ENCODE measurements at regions of chr4 and their contacts with region 1.

Region 1: GRCh38 chr4:26076000-26076587 is 162.1 kb downstream of the SMIM20 start:
- DNase-seq: peak; percentile 63
- H3K4me3 Mint-ChIP-seq: peak overlapping the region; percentile 64
- H3K27ac Mint-ChIP-seq: peak overlapping the region; percentile 92
- H3K4me1 Mint-ChIP-seq: peaks cover 86% of the 10 kb centered on the region
- H3K27me3 Mint-ChIP-seq: no peaks in the 10 kb centered on the region

Region 2: DNA sequence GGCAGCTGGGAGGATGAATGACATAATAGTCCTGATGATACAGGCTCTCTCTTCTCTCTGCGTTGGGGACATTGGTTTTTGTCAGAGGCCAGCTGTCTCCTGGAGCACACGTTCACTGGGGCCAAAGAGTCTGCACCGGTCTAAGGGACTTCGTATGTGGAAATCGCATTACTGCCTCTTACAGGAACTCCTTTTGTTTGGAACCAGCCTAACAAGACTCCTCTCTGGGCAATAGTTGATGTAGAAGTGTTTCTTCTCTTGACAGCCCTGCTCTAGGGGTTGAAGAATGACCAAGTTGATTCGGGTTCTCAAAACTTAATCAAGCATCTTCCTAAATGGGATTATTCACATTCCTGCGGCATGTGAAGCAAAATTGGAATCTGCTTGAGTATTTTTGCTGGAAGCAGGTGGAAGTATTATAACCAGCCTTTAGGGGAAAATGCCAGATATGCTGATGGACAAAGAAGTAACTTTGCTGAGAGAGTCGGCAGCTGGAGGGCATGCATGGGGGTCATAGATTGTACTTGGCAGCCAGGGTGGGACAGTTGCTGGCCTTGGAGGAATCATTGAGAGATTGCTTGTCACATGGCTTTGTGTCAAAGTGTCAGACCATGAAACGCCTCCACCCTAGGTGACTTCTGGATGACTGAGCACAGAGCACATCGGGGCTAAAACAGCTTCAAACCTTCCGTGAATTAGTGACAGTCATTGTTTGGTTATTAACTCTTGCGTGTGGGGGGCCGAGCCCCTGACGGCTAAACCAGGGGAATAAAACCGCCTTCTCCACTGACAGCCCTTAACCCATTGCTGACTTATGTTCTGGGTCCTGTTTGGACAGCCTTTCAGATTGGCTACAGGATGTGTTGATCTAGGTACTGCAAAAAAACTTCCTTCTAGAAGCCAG is 454.8 kb before region 1 on chr4:
- intact Hi-C with region 1: no loop called
- DNase-seq: no peak
- H3K4me3 Mint-ChIP-seq: no peak overlapping the region
- H3K27ac Mint-ChIP-seq: no peak overlapping the region
- H3K4me1 Mint-ChIP-seq: no peaks in the 10 kb centered on the region
- H3K27me3 Mint-ChIP-seq: peaks cover 4% of the 10 kb centered on the region

Region 3: DNA sequence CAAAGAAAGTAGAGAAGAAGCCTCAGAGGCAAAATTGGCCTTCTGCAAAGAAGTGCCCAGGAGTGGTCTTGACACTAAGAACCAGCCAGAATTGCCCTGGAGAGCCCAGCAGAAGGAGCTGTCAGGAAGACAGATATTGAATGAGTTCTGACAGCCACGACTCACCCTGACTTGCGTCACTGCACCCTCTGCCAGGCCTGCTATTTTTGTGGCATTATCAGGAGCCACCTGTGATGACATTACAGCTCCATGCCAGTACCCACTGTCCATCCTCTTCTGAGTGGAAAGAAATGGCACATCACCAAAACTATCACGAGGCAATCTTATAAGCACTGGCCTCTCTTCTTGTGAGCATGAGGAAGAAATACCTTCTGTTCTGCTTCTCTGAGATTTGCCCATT is 94.3 kb before region 1 on chr4:
- intact Hi-C with region 1: no loop called
- DNase-seq: no peak
- H3K4me3 Mint-ChIP-seq: no peak overlapping the region
- H3K27ac Mint-ChIP-seq: no peak overlapping the region
- H3K4me1 Mint-ChIP-seq: no peaks in the 10 kb centered on the region
- H3K27me3 Mint-ChIP-seq: peaks cover 2% of the 10 kb centered on the region

Region 4: DNA sequence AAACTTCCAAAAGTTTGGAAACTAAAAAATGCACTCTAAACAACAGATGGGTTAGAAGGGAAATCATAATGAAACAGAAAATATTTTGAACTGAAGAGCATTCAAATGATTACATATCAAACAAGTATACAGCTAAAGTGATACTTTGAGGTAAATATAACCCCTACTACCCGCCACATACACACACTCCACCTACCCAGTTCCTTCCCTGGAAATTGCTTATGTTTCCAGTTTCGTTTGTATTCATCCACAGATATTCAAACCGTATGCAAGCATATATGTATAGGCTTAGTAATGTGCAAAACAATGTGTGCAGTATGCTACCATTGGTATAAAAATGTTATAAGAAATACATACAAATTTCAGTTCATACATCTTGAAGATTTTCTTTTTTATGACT is 66.6 kb before region 1 on chr4:
- intact Hi-C with region 1: loop called (anchors 1 kb)
- DNase-seq: no peak
- H3K4me3 Mint-ChIP-seq: no peak overlapping the region
- H3K27ac Mint-ChIP-seq: peak overlapping the region; percentile 11
- H3K4me1 Mint-ChIP-seq: peaks cover 12% of the 10 kb centered on the region
- H3K27me3 Mint-ChIP-seq: peaks cover 10% of the 10 kb centered on the region

Region 5: DNA sequence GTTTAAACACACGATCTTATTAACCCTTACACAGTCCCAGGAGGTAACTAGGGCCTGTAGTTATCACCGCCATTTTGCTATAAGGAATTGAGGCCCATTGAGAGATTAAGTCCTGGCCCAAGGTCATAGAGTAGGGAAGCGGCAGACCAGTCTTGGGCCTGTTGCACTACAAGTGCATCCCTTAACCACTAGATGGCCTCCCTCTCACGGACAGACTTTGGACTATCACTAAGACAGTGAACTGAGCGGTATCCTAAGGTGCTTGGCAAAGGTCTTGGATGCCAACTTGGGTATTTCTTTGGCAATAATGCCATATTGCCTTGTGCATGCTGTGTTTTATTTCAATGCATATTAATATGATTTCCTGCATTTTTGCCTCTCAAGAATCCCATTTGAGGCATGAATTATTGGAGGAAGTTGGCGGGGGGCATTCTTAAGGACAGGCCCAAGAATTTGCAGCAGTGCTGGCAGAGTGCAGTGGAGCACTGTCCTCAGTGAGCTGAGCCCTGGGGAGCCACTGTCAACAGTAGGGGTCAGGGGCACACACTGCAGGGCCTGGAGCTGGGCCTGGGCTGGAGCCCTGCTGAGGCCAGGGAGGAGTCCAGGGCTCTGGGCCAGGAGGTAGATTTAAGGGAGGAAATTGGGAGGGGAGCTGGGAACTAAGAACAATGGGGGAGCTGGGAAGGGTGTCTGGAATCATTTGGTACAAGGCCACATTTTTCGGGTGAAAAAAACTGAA is 14.7 kb before region 1 on chr4:
- intact Hi-C with region 1: loop called (anchors 2 kb)
- DNase-seq: no peak
- H3K4me3 Mint-ChIP-seq: no peak overlapping the region
- H3K27ac Mint-ChIP-seq: no peak overlapping the region
- H3K4me1 Mint-ChIP-seq: peaks cover 32% of the 10 kb centered on the region
- H3K27me3 Mint-ChIP-seq: no peaks in the 10 kb centered on the region

Region 6: DNA sequence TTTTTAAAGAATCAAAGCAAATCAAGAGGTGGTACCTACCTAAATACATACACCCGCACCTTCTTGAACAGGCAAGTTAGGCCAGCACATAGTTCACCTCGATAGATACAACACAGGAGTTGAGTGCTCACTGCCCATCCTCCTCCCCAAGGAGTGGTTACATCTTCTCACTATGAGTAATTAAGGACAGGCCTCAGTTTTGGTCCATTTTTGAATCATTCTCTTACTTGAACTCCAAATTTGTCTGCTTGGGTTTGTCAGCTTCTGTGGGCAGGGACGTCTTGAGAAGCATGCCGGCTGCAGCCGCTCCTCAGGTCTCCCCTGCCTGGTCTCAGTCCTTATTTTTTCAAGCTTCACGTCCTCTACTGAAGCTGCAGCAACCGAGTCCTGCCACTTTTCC is 54.1 kb after region 1 on chr4:
- intact Hi-C with region 1: loop called (anchors 1 kb)
- DNase-seq: no peak
- H3K4me3 Mint-ChIP-seq: no peak overlapping the region
- H3K27ac Mint-ChIP-seq: peak overlapping the region; percentile 65
- H3K4me1 Mint-ChIP-seq: peaks cover 81% of the 10 kb centered on the region
- H3K27me3 Mint-ChIP-seq: no peaks in the 10 kb centered on the region

Region 7: DNA sequence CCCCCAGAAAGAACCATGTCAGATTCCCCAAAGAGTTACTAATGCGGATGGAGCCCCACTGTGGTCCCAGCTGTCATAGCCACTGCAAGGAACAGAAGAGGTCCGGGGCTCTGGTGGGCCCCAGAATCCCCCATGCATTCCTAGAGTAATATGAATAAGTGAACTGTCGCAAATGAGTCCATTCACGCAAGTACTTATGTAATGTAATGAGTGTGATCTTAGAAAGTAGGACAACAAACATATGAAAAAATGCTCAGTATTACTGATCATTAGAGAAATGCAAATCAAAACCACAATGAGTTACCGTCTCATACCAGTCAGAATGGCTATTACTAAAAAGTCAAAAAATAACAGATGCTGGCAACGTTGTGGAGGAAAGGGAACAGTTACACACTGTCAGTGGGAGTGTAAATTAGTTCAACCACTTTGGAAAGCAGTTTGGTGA is 103.2 kb after region 1 on chr4:
- intact Hi-C with region 1: loop called (anchors 1 kb)
- DNase-seq: no peak
- H3K4me3 Mint-ChIP-seq: no peak overlapping the region
- H3K27ac Mint-ChIP-seq: peak overlapping the region; percentile 64
- H3K4me1 Mint-ChIP-seq: peaks cover 44% of the 10 kb centered on the region
- H3K27me3 Mint-ChIP-seq: no peaks in the 10 kb centered on the region

Region 8: GRCh38 chr4:26410385-26411293 is 334.5 kb after region 1 on chr4:
- intact Hi-C with region 1: loop called (anchors 2 kb)
- DNase-seq: peak; percentile 19
- H3K4me3 Mint-ChIP-seq: no peak overlapping the region
- H3K27ac Mint-ChIP-seq: no peak overlapping the region
- H3K4me1 Mint-ChIP-seq: peaks cover 25% of the 10 kb centered on the region
- H3K27me3 Mint-ChIP-seq: no peaks in the 10 kb centered on the region

Measured in activated T-helper 1 cell treated with anti-CD3 and anti-CD28 coated beads, Interleukin-12 subunit alpha, Interleukin-12 subunit beta, Interleukin-2, Interleukin-4 antibody, amounts not matched to agents 30 ng/mL and 10 ng/mL and 1 ng/mL, durations not matched to agents 14 hours and 24 hours and 36 hours (primary cell).